CD4-positive, alpha-beta T cell (primary cell): ENCODE measurements at regions of chr1 and their contacts with region 1.

Region 1: GRCh38 chr1:101136739-101137138 is 100.1 kb upstream of the S1PR1 start:
- DNase-seq: peak in 4 of 14 experiments; percentile 53 to 75 (median 64)
- ATAC-seq: peak; percentile 81
- H3K4me3 ChIP-seq: no peak overlapping the region
- H3K4me3 Mint-ChIP-seq: peak overlapping the region; percentile 40
- H3K27ac ChIP-seq: no peak overlapping the region
- H3K27ac Mint-ChIP-seq: peak overlapping the region; percentile 72
- H3K4me1 ChIP-seq: peaks cover 12% of the 10 kb centered on the region
- H3K4me1 Mint-ChIP-seq: peaks cover 65% of the 10 kb centered on the region
- H3K27me3 ChIP-seq: no peaks in the 10 kb centered on the region
- H3K27me3 Mint-ChIP-seq: no peaks in the 10 kb centered on the region
- CTCF ChIP-seq: peak; percentile 52

Region 2: GRCh38 chr1:100921109-100921706 is 215.5 kb before region 1 on chr1:
- CTCF ChIA-PET with region 1: interaction called, 7 read pairs
- POLR2A ChIA-PET with region 1: interaction called, 3 read pairs
- intact Hi-C with region 1: loop called in 1 of 2 experiments (anchors 10 kb)
- DNase-seq: peak in 4 of 14 experiments; percentile 19 to 80 (median 74)
- ATAC-seq: no peak
- H3K4me3 ChIP-seq: no peak overlapping the region
- H3K4me3 Mint-ChIP-seq: no peak overlapping the region
- H3K27ac ChIP-seq: no peak overlapping the region
- H3K27ac Mint-ChIP-seq: peak overlapping the region; percentile 71
- H3K4me1 ChIP-seq: peaks cover 28% of the 10 kb centered on the region
- H3K4me1 Mint-ChIP-seq: peaks cover 39% of the 10 kb centered on the region
- H3K27me3 ChIP-seq: no peaks in the 10 kb centered on the region
- H3K27me3 Mint-ChIP-seq: no peaks in the 10 kb centered on the region
- CTCF ChIP-seq: peak; percentile 97

Region 3: GRCh38 chr1:101161619-101162018 is 24.9 kb after region 1 on chr1:
- CTCF ChIA-PET with region 1: no interaction called
- POLR2A ChIA-PET with region 1: no interaction called
- intact Hi-C with region 1: no loop called
- DNase-seq: no peak
- ATAC-seq: no peak
- H3K4me3 ChIP-seq: no peak overlapping the region
- H3K4me3 Mint-ChIP-seq: no peak overlapping the region
- H3K27ac ChIP-seq: no peak overlapping the region
- H3K27ac Mint-ChIP-seq: no peak overlapping the region
- H3K4me1 ChIP-seq: no peaks in the 10 kb centered on the region
- H3K4me1 Mint-ChIP-seq: no peaks in the 10 kb centered on the region
- H3K27me3 ChIP-seq: no peaks in the 10 kb centered on the region
- H3K27me3 Mint-ChIP-seq: no peaks in the 10 kb centered on the region
- CTCF ChIP-seq: no peak

Region 4: GRCh38 chr1:101178688-101179491 is 42.2 kb after region 1 on chr1:
- CTCF ChIA-PET with region 1: no interaction called
- POLR2A ChIA-PET with region 1: no interaction called
- intact Hi-C with region 1: loop called in 1 of 2 experiments (anchors 5 kb)
- DNase-seq: peak in 4 of 14 experiments; percentile 17 to 74 (median 46)
- ATAC-seq: peak; percentile 78
- H3K4me3 ChIP-seq: peak overlapping the region; percentile 20
- H3K4me3 Mint-ChIP-seq: peak overlapping the region; percentile 70
- H3K27ac ChIP-seq: peak overlapping the region; percentile 34 to 38
- H3K27ac Mint-ChIP-seq: peak overlapping the region; percentile 86
- H3K4me1 ChIP-seq: peaks cover 10% of the 10 kb centered on the region
- H3K4me1 Mint-ChIP-seq: peaks cover 41% of the 10 kb centered on the region
- H3K27me3 ChIP-seq: no peaks in the 10 kb centered on the region
- H3K27me3 Mint-ChIP-seq: no peaks in the 10 kb centered on the region
- CTCF ChIP-seq: no peak

Region 5: DNA sequence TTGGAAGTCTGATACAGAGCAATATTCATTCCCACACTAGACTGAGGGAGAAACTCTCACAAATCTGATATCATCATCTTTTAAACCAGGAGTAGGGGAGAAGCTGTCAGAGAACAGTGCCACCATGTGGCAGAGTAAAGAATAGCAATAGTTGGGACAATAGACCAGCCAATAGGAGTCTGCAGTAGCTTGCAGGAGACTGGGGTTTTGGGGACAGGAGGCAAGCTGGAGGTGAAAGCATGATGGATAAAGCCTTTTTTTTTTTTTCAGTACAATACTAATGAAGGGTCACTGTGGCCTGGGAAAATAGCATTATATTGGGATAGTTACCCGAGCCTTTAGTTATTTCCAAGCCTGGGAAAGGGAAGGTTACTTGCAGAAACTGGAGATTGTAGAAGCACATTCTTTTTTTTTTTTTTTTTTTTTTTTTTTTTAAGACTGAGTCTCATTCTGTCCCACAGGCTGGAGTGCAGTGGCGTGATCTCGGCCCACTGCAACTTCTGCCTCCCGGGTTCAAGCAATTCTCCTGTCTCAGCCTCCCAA is 220.8 kb after region 1 on chr1:
- CTCF ChIA-PET with region 1: interaction called, 3 read pairs
- POLR2A ChIA-PET with region 1: no interaction called
- intact Hi-C with region 1: loop called (anchors 2 to 5 kb)
- DNase-seq: peak; percentile 43 to 92 (median 60)
- ATAC-seq: peak; percentile 100
- H3K4me3 ChIP-seq: no peak overlapping the region
- H3K4me3 Mint-ChIP-seq: no peak overlapping the region
- H3K27ac ChIP-seq: no peak overlapping the region
- H3K27ac Mint-ChIP-seq: peak overlapping the region; percentile 5
- H3K4me1 ChIP-seq: peaks cover 7% of the 10 kb centered on the region
- H3K4me1 Mint-ChIP-seq: peaks cover 9% of the 10 kb centered on the region
- H3K27me3 ChIP-seq: no peaks in the 10 kb centered on the region
- H3K27me3 Mint-ChIP-seq: no peaks in the 10 kb centered on the region
- CTCF ChIP-seq: peak; percentile 84